Activated T-helper 1 cell treated with anti-CD3 and anti-CD28 coated beads, Interleukin-12 subunit alpha, Interleukin-12 subunit beta, Interleukin-2, Interleukin-4 antibody, amounts not matched to agents 30 ng/mL and 10 ng/mL and 1 ng/mL, durations not matched to agents 14 hours and 24 hours and 36 hours (primary cell): ENCODE measurements at regions of chr3 and their contacts with region 1.

Region 1: DNA sequence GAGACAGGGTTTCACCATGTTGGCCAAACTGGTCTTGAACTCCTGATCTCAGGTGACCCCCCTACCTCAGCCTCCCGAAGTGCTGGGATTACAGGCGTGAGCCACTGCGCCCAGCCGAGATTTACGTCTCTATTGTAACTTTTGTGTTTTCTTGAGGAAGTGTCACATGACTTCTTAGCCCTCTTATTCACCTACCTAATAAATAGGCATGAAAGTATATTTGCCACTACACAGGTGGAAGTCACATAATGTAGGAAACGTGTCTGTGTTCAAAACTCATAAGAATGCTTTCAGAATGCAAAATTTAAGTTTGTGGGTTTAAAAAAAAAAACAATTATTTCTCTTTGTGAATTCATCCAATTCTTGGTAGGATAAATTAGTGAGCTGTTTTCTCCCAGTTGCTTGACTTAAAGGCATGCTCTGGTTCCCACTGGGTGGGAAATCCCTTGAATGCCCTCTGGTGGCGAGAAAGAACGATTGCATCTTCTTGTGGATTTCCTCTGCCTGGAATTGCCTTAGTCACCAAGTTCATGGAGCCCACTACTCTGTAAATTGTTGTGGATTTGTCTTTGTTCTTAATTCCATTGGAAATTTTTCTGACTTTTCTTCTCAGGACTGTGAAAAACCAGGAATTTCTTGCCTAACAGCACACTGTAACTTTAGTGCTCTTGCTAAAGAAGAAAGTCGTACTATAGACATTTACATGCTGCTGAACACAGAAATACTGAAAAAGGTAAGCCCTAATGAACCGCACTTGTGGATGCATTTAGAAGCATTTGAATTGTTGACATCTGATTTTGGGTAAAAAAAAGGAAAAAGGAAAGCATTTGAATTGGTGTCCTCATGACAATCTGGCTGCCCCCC is 82.2 kb upstream of the CTDSPL start:
- DNase-seq: no peak
- H3K4me3 Mint-ChIP-seq: no peak overlapping the region
- H3K27ac Mint-ChIP-seq: no peak overlapping the region
- H3K4me1 Mint-ChIP-seq: no peaks in the 10 kb centered on the region
- H3K27me3 Mint-ChIP-seq: peaks cover 10% of the 10 kb centered on the region

Region 2: GRCh38 chr3:36729204-36730056 is 1050.1 kb before region 1 on chr3:
- intact Hi-C with region 1: loop called (anchors 5 kb)
- DNase-seq: no peak
- H3K4me3 Mint-ChIP-seq: no peak overlapping the region
- H3K27ac Mint-ChIP-seq: no peak overlapping the region
- H3K4me1 Mint-ChIP-seq: no peaks in the 10 kb centered on the region
- H3K27me3 Mint-ChIP-seq: peaks cover 14% of the 10 kb centered on the region